ENCODE measurements at regions of chr5 and their contacts with region 1.

Region 1: DNA sequence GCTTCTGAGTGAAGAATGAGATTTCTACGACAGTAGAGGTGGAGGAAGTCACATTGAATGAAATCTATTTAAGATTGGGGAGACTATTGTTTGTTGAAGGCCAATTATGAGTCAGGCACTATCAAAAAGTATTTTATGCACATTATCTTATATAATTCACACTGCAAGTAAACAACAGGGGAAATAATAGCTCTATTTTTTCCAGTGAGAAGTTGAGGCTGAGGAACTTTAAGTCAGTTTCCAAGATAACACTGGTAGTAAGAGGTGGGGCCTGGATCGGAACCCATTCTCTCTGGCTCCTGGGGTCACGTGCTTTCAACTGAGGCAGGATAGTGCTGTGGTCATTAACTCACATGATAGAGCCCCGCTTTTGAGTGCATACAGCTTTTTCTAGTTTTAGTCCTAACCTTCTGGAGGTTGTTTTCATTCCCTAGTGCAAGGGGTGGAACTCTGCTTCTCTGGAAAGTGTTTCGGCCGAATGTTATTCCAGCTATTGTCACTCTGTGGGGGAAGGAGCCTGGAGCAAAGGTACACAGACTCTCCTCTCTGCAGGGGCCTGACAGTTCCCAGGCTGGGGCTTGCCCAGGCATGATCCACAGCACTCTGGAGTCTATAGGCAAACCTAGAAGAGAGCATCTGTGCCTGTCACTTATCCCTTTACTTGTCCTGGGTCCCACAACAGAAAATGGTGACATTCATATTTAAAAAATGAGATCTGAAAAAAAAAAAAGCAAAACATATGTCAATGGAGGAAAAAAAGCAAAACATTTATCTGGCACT is 352.4 kb upstream of the ACTBL2 start:
- DNase-seq: peak; percentile 78
- H3K4me3 Mint-ChIP-seq: no peak overlapping the region
- H3K27ac Mint-ChIP-seq: no peak overlapping the region
- H3K4me1 Mint-ChIP-seq: peaks cover 43% of the 10 kb centered on the region
- H3K27me3 Mint-ChIP-seq: no peaks in the 10 kb centered on the region
- CTCF ChIP-seq: no peak

Region 2: DNA sequence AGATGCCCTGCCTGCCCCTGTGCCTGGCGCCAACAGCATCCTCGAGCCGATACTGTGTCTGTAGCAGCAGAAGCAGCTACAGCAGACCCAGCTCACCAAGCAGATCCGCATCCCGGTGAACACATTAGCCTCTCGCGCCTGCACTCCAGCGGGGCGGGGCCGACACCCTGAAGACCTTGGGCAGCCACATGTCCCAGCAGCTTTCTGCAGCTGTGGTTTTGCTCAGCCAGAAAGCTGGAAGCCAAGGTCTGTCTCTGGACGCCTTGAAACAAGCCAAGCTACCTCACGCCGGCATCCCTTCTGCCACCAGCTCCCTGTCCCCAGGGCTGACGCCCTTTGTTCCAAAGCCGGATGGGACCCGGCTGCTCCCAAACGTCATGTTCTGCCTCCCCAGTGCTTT is 412.0 kb before region 1 on chr5:
- CTCF ChIA-PET with region 1: no interaction called
- POLR2A ChIA-PET with region 1: no interaction called
- intact Hi-C with region 1: no loop called
- DNase-seq: no peak
- H3K4me3 Mint-ChIP-seq: no peak overlapping the region
- H3K27ac Mint-ChIP-seq: no peak overlapping the region
- H3K4me1 Mint-ChIP-seq: no peaks in the 10 kb centered on the region
- H3K27me3 Mint-ChIP-seq: no peaks in the 10 kb centered on the region
- CTCF ChIP-seq: no peak

Region 3: DNA sequence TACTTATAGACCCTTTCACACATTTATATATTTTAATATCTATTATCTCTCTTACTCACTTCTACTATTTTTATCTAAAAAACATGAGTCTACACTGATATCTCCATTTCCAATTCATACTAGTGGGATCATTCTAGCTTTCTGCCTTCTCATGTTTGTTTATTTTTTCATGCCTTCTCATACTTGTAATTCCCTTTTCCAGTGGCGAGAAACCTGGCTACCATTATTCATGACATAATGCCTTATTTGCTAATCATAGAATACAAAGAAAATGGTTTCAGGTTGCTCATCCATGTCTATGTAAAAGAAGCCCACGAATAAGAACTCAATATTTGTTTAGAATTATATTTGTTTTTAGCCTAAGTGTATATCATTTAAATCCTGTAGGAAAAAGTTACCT is 119.7 kb before region 1 on chr5:
- CTCF ChIA-PET with region 1: no interaction called
- POLR2A ChIA-PET with region 1: no interaction called
- intact Hi-C with region 1: no loop called
- DNase-seq: no peak
- H3K4me3 Mint-ChIP-seq: no peak overlapping the region
- H3K27ac Mint-ChIP-seq: no peak overlapping the region
- H3K4me1 Mint-ChIP-seq: peaks cover 10% of the 10 kb centered on the region
- H3K27me3 Mint-ChIP-seq: no peaks in the 10 kb centered on the region
- CTCF ChIP-seq: no peak

Region 4: GRCh38 chr5:57736716-57737115 is 98.3 kb before region 1 on chr5:
- CTCF ChIA-PET with region 1: no interaction called
- POLR2A ChIA-PET with region 1: no interaction called
- intact Hi-C with region 1: no loop called
- DNase-seq: no peak
- H3K4me3 Mint-ChIP-seq: no peak overlapping the region
- H3K27ac Mint-ChIP-seq: peak overlapping the region; percentile 72
- H3K4me1 Mint-ChIP-seq: peaks cover 28% of the 10 kb centered on the region
- H3K27me3 Mint-ChIP-seq: no peaks in the 10 kb centered on the region
- CTCF ChIP-seq: no peak

Region 5: DNA sequence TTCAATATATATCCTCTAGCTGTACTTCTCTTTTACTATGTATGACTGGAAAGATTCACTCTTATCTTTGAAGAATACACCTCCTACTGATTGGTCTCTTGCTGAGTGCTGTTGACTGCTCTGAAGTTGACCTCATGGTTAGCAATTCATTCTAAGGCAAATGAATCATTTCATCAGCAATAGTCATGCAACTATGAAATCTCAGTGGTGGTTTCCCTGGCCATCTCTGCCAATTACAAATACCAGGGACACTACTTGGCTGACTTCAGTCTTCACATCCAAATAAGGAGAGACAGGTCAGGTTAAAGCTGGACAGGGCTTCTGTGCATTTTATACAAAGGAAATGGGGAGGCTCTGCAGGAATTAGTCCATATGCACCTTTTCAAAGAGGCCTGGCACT is 18.9 kb before region 1 on chr5:
- CTCF ChIA-PET with region 1: interaction called, 4 read pairs
- POLR2A ChIA-PET with region 1: interaction called, 51 read pairs
- intact Hi-C with region 1: loop called (anchors 1 kb)
- DNase-seq: peak; percentile 91
- H3K4me3 Mint-ChIP-seq: no peak overlapping the region
- H3K27ac Mint-ChIP-seq: peak overlapping the region; percentile 89
- H3K4me1 Mint-ChIP-seq: peaks cover 17% of the 10 kb centered on the region
- H3K27me3 Mint-ChIP-seq: no peaks in the 10 kb centered on the region
- CTCF ChIP-seq: no peak